SK-N-SH (cell line): ENCODE measurements at regions of chr12 and their contacts with region 1.

Region 1: GRCh38 chr12:19186722-19187661 is 57.5 kb downstream of the PLEKHA5 start:
- DNase-seq: peak; percentile 38
- H3K4me3 ChIP-seq: no peak overlapping the region
- H3K27ac ChIP-seq: no peak overlapping the region
- H3K4me1 ChIP-seq: peaks cover 3 to 28% of the 10 kb centered on the region in 2 experiments; a peak in 3 of 4 replicates
- H3K27me3 ChIP-seq: no peaks in the 10 kb centered on the region
- CTCF ChIP-seq: peak; percentile 81
- EP300 ChIP-seq: no peak
- RAD21 ChIP-seq: peak; percentile 80

Region 2: DNA sequence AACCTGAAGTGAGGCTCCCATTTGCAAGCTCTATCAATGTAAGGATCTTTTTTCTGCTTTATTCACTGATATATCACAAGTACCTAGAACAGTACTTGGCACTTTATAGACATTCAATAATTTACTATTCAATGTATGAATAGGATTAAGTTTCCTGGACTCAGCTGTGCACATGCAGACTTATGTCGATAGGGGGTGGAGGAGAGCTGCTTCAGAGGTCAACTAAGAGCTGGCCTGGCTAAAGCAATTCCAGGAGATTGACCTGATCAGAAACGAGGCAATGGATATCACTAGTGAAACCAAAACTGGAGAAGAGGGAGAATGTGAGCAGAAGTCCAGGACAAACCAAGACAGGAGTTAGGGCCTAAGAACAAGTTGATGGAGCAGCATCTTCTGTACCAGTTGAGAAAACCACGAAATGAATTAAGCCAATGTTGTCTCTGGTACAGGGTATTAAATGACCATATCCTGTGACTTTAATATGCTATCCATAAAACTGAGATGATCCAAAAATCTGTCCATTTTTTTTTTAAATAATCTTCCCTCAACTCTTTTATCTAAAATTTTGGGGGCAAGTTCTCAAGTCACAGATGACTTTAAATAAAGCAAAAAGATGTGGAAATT is 756.5 kb before region 1 on chr12:
- CTCF ChIA-PET with region 1: interaction called, 11 read pairs
- POLR2A ChIA-PET with region 1: no interaction called
- DNase-seq: peak; percentile 30
- H3K4me3 ChIP-seq: no peak overlapping the region; a peak in 1 of 4 replicates
- H3K27ac ChIP-seq: no peak overlapping the region
- H3K4me1 ChIP-seq: no peaks in the 10 kb centered on the region
- H3K27me3 ChIP-seq: no peaks in the 10 kb centered on the region
- CTCF ChIP-seq: peak; percentile 92
- EP300 ChIP-seq: no peak
- RAD21 ChIP-seq: peak; percentile 81

Region 3: DNA sequence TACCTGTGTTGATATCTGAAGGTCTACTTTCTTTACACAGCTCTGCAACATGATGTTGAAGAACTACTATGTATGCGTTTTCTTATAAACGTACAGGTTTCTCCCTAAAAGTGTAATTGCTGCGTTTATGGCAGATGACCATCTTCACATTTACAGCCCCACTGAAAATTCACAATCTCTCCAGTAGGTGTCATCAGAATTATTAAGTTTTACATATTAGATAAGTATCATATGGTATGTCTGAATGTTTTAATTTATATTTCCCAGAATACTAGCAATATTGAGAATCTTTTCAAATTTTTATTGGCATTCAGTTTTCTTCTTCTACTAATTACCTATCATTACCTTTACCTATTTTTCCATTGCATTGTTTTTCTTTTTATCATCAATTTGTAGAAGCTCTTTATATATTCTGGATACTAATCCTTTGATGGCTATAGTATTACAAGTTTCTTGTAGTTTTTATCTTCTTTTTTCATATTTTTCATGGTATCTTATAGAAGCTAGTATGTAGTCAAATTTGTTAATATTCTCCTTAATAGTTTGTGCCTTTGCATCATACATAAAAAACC is 325.6 kb before region 1 on chr12:
- CTCF ChIA-PET with region 1: interaction called, 17 read pairs
- POLR2A ChIA-PET with region 1: no interaction called
- DNase-seq: no peak
- H3K4me3 ChIP-seq: no peak overlapping the region
- H3K27ac ChIP-seq: no peak overlapping the region
- H3K4me1 ChIP-seq: peaks cover 0 to 4% of the 10 kb centered on the region in 2 experiments; a peak in 2 of 4 replicates
- H3K27me3 ChIP-seq: no peaks in the 10 kb centered on the region
- CTCF ChIP-seq: peak; percentile 53
- EP300 ChIP-seq: no peak
- RAD21 ChIP-seq: peak; percentile 50; the same call in 1 of the 2 replicates

Region 4: DNA sequence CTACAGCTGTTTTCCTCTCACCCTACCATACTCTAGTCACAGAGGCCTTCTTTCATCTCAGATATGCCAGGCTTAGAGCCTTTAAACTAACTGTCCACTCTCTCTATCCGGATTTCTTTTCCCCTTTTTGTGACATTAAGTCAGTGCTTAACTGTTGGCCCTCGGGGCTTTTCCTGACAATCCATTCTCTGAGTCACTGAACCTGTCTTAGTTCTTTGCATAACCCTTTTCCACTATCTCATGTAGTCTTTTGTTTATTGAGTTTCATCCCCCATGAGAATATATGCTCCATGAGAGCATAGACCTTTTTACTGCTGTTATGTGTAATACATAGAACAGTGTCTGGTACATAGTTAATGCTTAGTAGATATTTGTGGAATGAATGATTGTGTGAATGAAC is 11.3 kb after region 1 on chr12:
- CTCF ChIA-PET with region 1: interaction called, 15 read pairs
- POLR2A ChIA-PET with region 1: no interaction called
- DNase-seq: no peak
- H3K4me3 ChIP-seq: no peak overlapping the region
- H3K27ac ChIP-seq: no peak overlapping the region
- H3K4me1 ChIP-seq: no peaks in the 10 kb centered on the region; a peak in 1 of 4 replicates
- H3K27me3 ChIP-seq: no peaks in the 10 kb centered on the region
- CTCF ChIP-seq: no peak
- EP300 ChIP-seq: no peak
- RAD21 ChIP-seq: no peak

Region 5: DNA sequence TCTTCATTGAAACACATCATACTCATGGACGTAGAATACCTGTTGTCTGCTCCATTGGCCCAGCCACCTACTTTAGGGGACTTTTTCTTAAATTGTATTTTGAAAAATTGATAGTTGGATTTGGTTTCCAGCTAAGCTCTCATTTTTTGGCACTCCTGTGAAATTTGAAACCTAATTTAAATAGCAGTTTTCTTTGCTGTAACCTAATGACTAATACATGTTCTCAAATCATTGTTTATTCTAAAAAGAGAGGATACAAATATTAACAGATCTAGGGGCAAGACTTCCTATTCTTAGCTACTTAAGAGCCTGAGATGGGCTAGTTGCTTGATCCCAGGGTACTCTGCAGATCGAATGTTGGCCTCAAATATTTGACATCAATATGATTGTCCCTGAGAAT is 21.5 kb after region 1 on chr12:
- CTCF ChIA-PET with region 1: no interaction called
- POLR2A ChIA-PET with region 1: no interaction called
- DNase-seq: no peak
- H3K4me3 ChIP-seq: no peak overlapping the region
- H3K27ac ChIP-seq: no peak overlapping the region
- H3K4me1 ChIP-seq: no peaks in the 10 kb centered on the region
- H3K27me3 ChIP-seq: no peaks in the 10 kb centered on the region
- CTCF ChIP-seq: no peak
- EP300 ChIP-seq: no peak
- RAD21 ChIP-seq: no peak

Region 6: DNA sequence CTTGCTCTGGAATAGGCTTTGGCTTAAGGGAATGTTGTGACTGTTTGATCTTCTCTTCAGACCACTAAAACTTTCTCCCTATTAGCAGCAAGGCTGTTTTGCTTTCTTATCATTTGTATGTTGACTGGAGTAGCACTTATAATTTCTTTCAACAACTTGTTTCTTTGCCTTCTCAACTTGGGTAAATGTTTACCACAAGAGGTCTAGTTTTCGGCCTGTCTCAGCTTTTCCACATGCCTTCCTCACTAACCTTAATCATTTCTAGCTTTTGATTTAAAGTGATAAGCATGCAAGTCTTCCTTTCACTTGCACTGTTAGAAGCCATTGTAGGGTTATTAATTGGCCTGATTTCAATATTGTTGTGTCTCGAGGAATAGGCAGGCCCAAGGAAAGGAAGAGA is 125.6 kb after region 1 on chr12:
- CTCF ChIA-PET with region 1: no interaction called
- POLR2A ChIA-PET with region 1: no interaction called
- DNase-seq: no peak
- H3K4me3 ChIP-seq: no peak overlapping the region
- H3K27ac ChIP-seq: no peak overlapping the region
- H3K4me1 ChIP-seq: no peaks in the 10 kb centered on the region
- H3K27me3 ChIP-seq: no peaks in the 10 kb centered on the region
- CTCF ChIP-seq: no peak
- EP300 ChIP-seq: no peak
- RAD21 ChIP-seq: no peak

Region 7: GRCh38 chr12:19665121-19665900 is 478.3 kb after region 1 on chr12:
- CTCF ChIA-PET with region 1: no interaction called
- POLR2A ChIA-PET with region 1: no interaction called
- DNase-seq: no peak
- H3K4me3 ChIP-seq: no peak overlapping the region
- H3K27ac ChIP-seq: no peak overlapping the region
- H3K4me1 ChIP-seq: no peaks in the 10 kb centered on the region
- H3K27me3 ChIP-seq: no peaks in the 10 kb centered on the region
- CTCF ChIP-seq: no peak
- EP300 ChIP-seq: no peak
- RAD21 ChIP-seq: no peak

Region 8: GRCh38 chr12:19841451-19841850 is 654.5 kb after region 1 on chr12:
- CTCF ChIA-PET with region 1: no interaction called
- POLR2A ChIA-PET with region 1: no interaction called
- DNase-seq: no peak
- H3K4me3 ChIP-seq: no peak overlapping the region
- H3K27ac ChIP-seq: no peak overlapping the region
- H3K4me1 ChIP-seq: no peaks in the 10 kb centered on the region; a peak in 1 of 4 replicates
- H3K27me3 ChIP-seq: no peaks in the 10 kb centered on the region
- CTCF ChIP-seq: no peak
- EP300 ChIP-seq: no peak
- RAD21 ChIP-seq: no peak